ENCODE measurements at regions of chr5 and their contacts with region 1.

Region 1: GRCh38 chr5:110306650-110307049 is 419.8 kb downstream of the TMEM232 start:
- DNase-seq: no peak
- ATAC-seq: no peak
- H3K4me3 ChIP-seq: no peak overlapping the region
- H3K27ac ChIP-seq: no peak overlapping the region
- H3K4me1 ChIP-seq: peaks cover 7% of the 10 kb centered on the region; the same call in 1 of the 2 replicates
- H3K27me3 ChIP-seq: no peaks in the 10 kb centered on the region
- CTCF ChIP-seq: no peak
- EP300 ChIP-seq: no peak
- POLR2A ChIP-seq: no peak
- RAD21 ChIP-seq: no peak

Region 2: GRCh38 chr5:109987970-109988369 is 318.7 kb before region 1 on chr5:
- CTCF ChIA-PET with region 1: no interaction called
- POLR2A ChIA-PET with region 1: no interaction called
- in situ Hi-C with region 1: no loop called
- intact Hi-C with region 1: no loop called
- DNase-seq: no peak
- ATAC-seq: no peak
- H3K4me3 ChIP-seq: no peak overlapping the region
- H3K27ac ChIP-seq: no peak overlapping the region
- H3K4me1 ChIP-seq: peaks cover 73% of the 10 kb centered on the region
- H3K27me3 ChIP-seq: no peaks in the 10 kb centered on the region
- CTCF ChIP-seq: no peak
- EP300 ChIP-seq: no peak
- POLR2A ChIP-seq: no peak
- RAD21 ChIP-seq: no peak

Region 3: DNA sequence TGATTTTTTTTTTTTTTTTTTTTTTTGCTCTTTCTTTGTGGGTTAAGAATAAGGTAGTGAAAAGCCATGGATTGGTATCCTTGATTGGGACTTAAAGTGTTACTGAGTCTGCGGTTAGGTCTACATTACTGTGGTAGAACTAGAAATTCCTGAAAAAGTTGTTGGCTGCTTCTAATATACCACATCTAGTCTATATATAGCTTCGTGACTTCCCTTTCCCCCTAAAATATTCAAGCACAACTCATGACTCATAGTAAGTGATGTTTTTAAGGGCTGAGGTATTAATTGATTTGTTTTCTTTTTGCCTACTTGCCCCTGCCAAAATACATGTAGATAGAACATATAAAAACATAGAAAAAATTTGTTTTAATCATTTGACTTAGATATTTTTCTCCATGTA is 172.2 kb after region 1 on chr5:
- CTCF ChIA-PET with region 1: no interaction called
- POLR2A ChIA-PET with region 1: no interaction called
- in situ Hi-C with region 1: no loop called
- intact Hi-C with region 1: loop called (anchors 5 kb)
- DNase-seq: no peak
- ATAC-seq: no peak
- H3K4me3 ChIP-seq: no peak overlapping the region
- H3K27ac ChIP-seq: no peak overlapping the region
- H3K4me1 ChIP-seq: no peaks in the 10 kb centered on the region
- H3K27me3 ChIP-seq: no peaks in the 10 kb centered on the region; a peak in 1 of 5 replicates
- CTCF ChIP-seq: no peak
- EP300 ChIP-seq: no peak
- POLR2A ChIP-seq: no peak
- RAD21 ChIP-seq: no peak

Region 4: DNA sequence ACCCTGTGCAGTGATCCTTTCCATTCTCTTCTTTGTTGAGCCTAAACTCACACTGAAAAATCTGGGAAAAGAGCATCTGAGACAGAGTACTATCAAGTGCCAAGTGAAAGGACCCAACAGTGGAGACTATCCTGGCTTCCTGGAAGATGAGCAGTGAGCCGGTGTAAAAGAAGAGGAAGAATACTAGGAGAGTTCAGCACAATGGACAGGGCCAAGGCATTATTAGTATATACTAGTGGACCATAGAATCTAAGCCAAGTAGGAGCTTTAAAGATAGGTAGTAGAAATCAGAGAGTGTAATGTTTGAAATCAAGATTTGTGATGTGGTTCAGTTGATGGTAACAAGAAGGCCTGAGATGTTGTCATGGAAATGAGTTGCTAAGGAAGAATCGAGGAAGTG is 1058.3 kb after region 1 on chr5:
- CTCF ChIA-PET with region 1: no interaction called
- POLR2A ChIA-PET with region 1: no interaction called
- in situ Hi-C with region 1: no loop called
- intact Hi-C with region 1: no loop called
- DNase-seq: no peak
- ATAC-seq: no peak
- H3K4me3 ChIP-seq: no peak overlapping the region
- H3K27ac ChIP-seq: no peak overlapping the region
- H3K4me1 ChIP-seq: no peaks in the 10 kb centered on the region
- H3K27me3 ChIP-seq: no peaks in the 10 kb centered on the region
- CTCF ChIP-seq: no peak
- EP300 ChIP-seq: no peak
- POLR2A ChIP-seq: no peak
- RAD21 ChIP-seq: no peak

Measured in HepG2 (cell line).